ENCODE measurements at regions of chr6 and their contacts with region 1.

Region 1: DNA sequence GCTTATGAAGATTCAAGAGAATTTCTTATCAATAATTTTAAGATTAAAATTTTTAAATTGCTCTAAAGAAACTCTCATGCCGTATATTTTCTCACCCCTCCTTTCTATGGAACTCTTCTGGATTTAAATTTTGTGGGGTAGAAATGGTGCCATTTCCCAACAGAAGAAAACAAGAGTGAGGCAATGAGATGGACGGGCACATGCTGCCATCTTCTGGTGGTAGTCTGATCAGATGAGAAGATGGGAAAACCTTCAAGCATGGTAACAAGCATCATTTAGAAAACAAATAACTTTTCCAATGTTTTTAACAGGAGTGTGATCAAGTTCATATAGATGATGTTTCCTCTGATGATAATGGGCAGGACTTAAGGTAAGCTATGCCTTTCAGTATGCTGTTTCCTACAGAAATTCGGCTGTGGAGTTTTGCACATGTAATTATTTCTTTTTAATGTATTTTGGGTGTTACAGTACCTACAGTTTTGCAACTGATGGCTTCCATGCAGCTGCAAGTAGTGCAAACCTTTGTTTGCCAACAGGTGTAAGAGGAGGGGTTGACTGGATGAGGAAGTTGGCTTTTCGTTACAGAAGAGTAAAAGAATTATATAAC is 271.4 kb downstream of the EYA4 start:
- DNase-seq: no peak
- H3K4me3 ChIP-seq: no peak overlapping the region
- H3K27ac ChIP-seq: no peak overlapping the region
- H3K4me1 ChIP-seq: no peaks in the 10 kb centered on the region
- H3K27me3 ChIP-seq: no peaks in the 10 kb centered on the region
- CTCF ChIP-seq: peak; percentile 16 to 73 (median 59)

Region 2: GRCh38 chr6:132820629-132821381 is 691.7 kb before region 1 on chr6:
- intact Hi-C with region 1: loop called (anchors 5 kb)
- DNase-seq: no peak
- H3K4me3 ChIP-seq: no peak overlapping the region
- H3K27ac ChIP-seq: peak overlapping the region in 1 of 2 donors; percentile 9
- H3K4me1 ChIP-seq: peaks cover 2 to 12% of the 10 kb centered on the region in 2 donors
- H3K27me3 ChIP-seq: no peaks in the 10 kb centered on the region
- CTCF ChIP-seq: no peak

Region 3: GRCh38 chr6:132962936-132963868 is 549.3 kb before region 1 on chr6:
- intact Hi-C with region 1: loop called (anchors 1 kb)
- DNase-seq: peak in 1 of 2 donors; percentile 65
- H3K4me3 ChIP-seq: no peak overlapping the region
- H3K27ac ChIP-seq: no peak overlapping the region
- H3K4me1 ChIP-seq: no peaks in the 10 kb centered on the region
- H3K27me3 ChIP-seq: no peaks in the 10 kb centered on the region
- CTCF ChIP-seq: peak; percentile 26 to 65 (median 38)

Region 4: DNA sequence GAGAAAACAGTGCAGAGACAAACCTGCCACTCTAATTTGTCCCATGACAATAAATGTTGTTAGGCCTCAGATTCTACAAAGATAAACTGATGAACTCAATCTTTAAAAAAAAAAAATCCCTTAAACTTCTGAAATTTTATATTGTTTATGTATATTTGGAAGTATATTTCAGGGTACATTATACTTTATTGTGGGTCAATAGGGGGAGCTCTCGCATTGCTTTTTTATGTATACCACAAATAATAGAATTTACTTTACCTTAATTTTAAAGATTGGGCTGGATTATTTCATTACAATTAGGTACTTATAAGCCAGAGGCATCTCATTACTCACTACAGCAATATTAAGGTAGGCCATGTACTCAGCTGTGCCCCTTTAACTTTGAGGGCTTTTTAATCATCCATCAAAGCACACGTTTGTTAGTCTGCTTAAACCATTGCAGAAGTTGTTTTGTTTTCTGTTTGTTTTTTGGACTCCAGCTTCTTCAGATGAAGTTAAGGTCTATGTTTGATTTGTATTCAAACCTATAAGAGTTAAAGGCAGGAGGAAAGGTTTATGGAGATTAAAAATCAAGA is 327.6 kb before region 1 on chr6:
- intact Hi-C with region 1: loop called (anchors 1 kb)
- DNase-seq: no peak
- H3K4me3 ChIP-seq: no peak overlapping the region
- H3K27ac ChIP-seq: no peak overlapping the region
- H3K4me1 ChIP-seq: no peaks in the 10 kb centered on the region
- H3K27me3 ChIP-seq: no peaks in the 10 kb centered on the region
- CTCF ChIP-seq: peak; percentile 15 to 59 (median 20)

Region 5: DNA sequence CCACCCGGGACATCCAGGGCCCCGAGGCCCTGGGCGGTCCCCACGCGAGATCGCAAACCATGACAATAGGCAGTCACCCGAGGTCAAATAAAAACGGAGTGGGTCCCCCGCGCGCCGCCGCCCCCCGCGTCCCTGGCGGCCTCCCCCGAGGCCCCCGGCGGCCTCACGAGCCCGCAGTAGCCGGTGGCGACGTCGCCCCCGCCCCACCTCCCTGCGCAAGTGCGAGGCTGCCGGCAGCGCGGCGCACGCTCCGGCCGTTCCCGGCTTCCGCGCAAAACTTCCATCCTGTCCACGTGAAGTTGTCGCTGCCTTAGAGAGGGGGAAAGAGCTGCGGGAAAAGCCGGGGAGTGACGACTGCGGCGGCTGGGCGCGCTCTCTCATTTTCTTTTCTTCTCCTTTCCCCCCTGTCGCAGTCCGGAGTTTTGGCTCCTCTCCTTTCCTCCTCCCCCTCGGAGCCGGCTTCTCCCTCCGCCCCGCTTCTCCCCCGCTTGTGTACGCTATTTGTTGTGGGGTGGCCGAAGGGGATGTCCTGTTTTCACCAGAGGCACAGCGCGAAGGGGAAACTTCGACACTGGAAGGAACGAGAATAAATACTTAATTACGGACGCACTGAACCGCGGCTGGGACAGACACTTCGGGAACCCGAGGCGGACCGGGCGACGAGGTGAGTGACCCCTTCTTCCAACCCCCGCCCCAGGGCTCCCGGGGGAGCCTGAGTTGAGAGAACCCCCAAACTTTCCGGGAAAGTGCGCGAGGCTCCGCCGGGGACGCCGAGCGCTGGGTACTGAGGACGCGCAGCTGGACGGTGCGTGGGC is 271.2 kb before region 1 on chr6 and contains the start of gene EYA4:
- intact Hi-C with region 1: loop called (anchors 5 kb)
- DNase-seq: no peak
- H3K4me3 ChIP-seq: peak within 1 kb of the TSS; percentile 37 to 58
- H3K27ac ChIP-seq: no peak within 1 kb of the TSS
- H3K4me1 ChIP-seq: peaks cover 0 to 11% of the 10 kb centered on the region in 2 donors
- H3K27me3 ChIP-seq: no peaks in the 10 kb centered on the region
- CTCF ChIP-seq: no peak
- total RNA-seq, gene EYA4: 6.2 TPM

Region 6: DNA sequence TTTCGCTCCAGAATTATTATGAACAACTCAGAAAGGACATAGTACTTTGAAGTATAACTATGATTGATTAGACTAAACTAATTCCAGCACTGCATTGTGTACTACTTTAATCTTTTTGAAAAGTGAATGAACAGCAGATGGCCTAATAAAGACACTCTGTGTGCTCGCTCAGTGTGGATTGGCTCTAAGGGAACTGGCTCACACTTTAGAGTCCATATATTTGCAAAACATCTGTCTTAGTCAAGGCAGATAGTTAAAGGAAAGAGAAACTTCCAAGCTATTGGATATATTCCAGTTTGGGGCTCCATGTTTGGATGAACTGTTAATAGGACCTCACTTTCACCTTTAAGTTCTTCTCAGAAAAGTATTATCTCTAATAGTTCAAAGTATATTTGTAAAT is 52.4 kb before region 1 on chr6:
- intact Hi-C with region 1: no loop called
- DNase-seq: no peak
- H3K4me3 ChIP-seq: no peak overlapping the region
- H3K27ac ChIP-seq: no peak overlapping the region
- H3K4me1 ChIP-seq: no peaks in the 10 kb centered on the region
- H3K27me3 ChIP-seq: no peaks in the 10 kb centered on the region
- CTCF ChIP-seq: no peak

Region 7: GRCh38 chr6:133553652-133554051 is 41.1 kb after region 1 on chr6:
- intact Hi-C with region 1: loop called (anchors 2 kb)
- DNase-seq: no peak
- H3K4me3 ChIP-seq: no peak overlapping the region
- H3K27ac ChIP-seq: no peak overlapping the region
- H3K4me1 ChIP-seq: no peaks in the 10 kb centered on the region
- H3K27me3 ChIP-seq: no peaks in the 10 kb centered on the region
- CTCF ChIP-seq: peak; percentile 13 to 64 (median 57)

Region 8: DNA sequence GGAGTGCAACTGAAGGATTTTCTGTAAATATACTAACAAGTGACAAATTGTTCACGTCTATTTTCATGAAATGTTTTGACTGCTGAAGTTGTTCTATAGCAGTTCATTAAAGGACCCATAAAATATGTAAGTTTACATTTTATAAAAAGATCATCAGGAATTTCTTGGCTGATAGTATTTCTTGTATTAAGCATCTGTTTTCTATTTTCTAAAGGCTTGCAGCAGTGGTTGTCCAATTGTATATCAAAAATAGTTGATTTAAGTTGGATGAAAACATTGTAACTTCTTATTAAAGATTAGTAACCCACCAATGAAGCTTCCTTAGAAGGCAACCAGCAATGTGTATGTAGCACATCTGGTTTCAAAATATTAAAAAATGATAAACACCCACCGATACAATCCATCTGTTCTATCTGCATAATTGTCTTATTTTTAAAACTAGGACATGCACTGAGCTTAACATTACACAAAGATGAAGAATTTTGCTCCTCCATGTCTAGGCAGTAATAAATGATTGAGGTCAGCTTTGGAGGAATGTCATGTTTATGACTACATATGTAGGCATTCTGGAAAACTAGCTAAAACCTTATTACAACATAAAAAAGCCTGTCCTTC is 75.1 kb after region 1 on chr6:
- intact Hi-C with region 1: no loop called
- DNase-seq: no peak
- H3K4me3 ChIP-seq: no peak overlapping the region
- H3K27ac ChIP-seq: no peak overlapping the region
- H3K4me1 ChIP-seq: no peaks in the 10 kb centered on the region
- H3K27me3 ChIP-seq: no peaks in the 10 kb centered on the region
- CTCF ChIP-seq: no peak

Region 9: GRCh38 chr6:133827766-133828165 is 315.3 kb after region 1 on chr6:
- intact Hi-C with region 1: no loop called
- DNase-seq: no peak
- H3K4me3 ChIP-seq: no peak overlapping the region
- H3K27ac ChIP-seq: no peak overlapping the region
- H3K4me1 ChIP-seq: no peaks in the 10 kb centered on the region
- H3K27me3 ChIP-seq: no peaks in the 10 kb centered on the region
- CTCF ChIP-seq: no peak